ENCODE measurements at regions of chr7 and their contacts with region 1.

Region 1: DNA sequence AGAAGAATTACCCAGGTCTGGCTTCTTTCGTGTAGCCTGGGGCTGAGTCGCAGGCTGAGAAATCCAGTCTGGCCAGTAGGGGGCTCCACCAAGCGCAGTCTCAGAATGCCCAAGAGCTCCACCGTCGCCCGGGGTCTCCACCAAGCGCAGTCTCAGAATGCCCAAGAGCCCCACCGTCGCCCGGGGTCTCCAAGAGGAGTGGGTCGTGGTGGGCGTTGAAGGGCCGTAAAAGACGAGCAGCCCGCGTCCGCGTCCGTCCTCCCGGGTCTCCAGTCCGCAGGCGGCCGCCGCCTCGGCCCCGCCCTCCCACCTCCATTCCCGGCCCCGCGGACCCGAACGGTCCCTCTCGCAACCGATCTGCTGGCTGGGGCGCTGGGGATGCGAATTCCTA is 895 bp upstream of the ZYX start:
- DNase-seq: peak; percentile 83 to 88 (median 84)
- H3K4me3 ChIP-seq: peak overlapping the region; percentile 72 to 97
- H3K4me3 Mint-ChIP-seq: peak overlapping the region; percentile 91 to 95 (median 92)
- H3K27ac ChIP-seq: peak overlapping the region; percentile 91
- H3K27ac Mint-ChIP-seq: peak overlapping the region; percentile 92 to 99 (median 96)
- H3K4me1 ChIP-seq: peaks cover 70% of the 10 kb centered on the region
- H3K4me1 Mint-ChIP-seq: peaks cover 38 to 48% (median 44%) of the 10 kb centered on the region in 4 donors
- H3K27me3 ChIP-seq: no peaks in the 10 kb centered on the region
- H3K27me3 Mint-ChIP-seq: no peaks in the 10 kb centered on the region

Region 2: DNA sequence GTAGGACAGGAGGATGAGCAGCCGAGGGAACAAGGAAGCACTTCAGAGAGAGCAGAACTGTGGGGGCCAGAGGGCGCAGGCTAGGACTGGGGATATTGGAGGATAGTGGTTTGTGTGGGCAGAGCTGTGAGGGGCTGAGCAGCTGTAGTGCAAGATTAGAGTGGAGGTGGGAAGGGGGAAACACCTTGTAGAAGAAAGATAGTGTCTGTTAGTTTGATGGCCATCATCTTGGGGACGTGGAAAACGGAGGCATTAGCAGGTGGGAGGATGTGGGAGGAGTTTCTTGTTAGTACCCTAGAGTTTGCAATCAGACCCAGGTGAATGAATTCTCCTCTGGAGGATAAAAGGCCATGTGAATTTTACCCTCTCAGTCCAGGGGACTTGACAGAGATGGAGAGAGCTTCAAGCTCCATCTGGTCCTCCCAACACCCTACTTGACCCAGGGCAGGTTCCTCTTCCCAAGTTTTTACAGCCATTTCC is 575.5 kb before region 1 on chr7:
- CTCF ChIA-PET with region 1: no interaction called
- POLR2A ChIA-PET with region 1: interaction called, 15 read pairs
- intact Hi-C with region 1: loop called (anchors 5 kb)
- DNase-seq: peak in 3 of 5 donors; percentile 38 to 68 (median 44)
- H3K4me3 ChIP-seq: peak overlapping the region in 1 of 2 donors; percentile 23
- H3K4me3 Mint-ChIP-seq: peak overlapping the region; percentile 16 to 100 (median 77)
- H3K27ac ChIP-seq: peak overlapping the region; percentile 99
- H3K27ac Mint-ChIP-seq: peak overlapping the region; percentile 99 to 100 (median 100)
- H3K4me1 ChIP-seq: peaks cover 97% of the 10 kb centered on the region
- H3K4me1 Mint-ChIP-seq: peaks cover 77 to 100% (median 92%) of the 10 kb centered on the region in 4 donors
- H3K27me3 ChIP-seq: no peaks in the 10 kb centered on the region
- H3K27me3 Mint-ChIP-seq: no peaks in the 10 kb centered on the region

Region 3: DNA sequence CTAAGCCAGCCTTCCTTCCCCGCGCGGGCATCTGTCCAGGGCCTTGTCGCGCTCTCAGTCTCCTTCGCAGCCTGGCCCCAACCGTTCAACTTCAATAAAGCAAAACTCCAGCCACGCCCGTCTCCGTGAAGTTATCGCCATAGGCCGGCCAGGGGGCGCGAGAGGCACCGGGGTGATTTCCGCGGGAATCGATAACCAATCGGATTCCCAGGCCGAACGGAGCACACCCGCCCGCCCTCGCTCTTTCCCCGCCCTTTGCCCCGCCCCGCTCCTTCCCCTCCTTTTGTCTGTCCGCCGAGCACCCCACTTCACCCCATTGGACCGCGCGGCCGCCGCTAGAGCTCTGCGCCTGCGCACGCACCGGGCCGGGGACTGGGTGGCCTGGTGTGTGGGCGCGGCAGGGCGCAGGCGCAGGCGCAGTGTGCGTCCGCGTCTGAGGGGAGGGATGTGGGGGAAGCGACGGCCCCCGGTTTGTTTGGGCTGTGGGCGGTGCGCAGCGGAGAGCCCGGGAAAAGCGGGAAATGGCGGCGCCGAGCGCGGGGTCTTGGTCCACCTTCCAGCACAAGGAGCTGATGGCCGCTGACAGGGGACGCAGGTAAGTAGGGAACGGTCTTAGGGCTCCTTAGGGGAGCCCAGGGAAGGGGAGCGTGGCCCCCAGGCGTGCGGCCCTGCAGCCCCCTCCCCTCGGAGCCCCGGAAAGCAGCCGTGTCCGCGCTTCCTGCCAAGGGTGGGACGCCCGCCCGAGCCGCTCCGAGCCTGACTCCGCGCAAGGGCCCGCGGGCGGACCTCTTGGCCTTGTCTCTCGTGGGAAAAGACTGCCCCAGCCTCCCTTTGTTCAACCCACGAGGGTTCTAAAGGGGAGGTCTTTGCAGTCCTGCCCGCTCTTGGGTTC is 92.1 kb before region 1 on chr7 and contains the start of gene CASP2:
- CTCF ChIA-PET with region 1: interaction called, 3 read pairs
- POLR2A ChIA-PET with region 1: interaction called, 13 read pairs
- intact Hi-C with region 1: loop called (anchors 2 kb)
- DNase-seq: peak; percentile 99 to 100 (median 99)
- H3K4me3 ChIP-seq: peak within 1 kb of the TSS; percentile 82 to 92
- H3K4me3 Mint-ChIP-seq: peak within 1 kb of the TSS; percentile 92 to 99 (median 96)
- H3K27ac ChIP-seq: peak within 1 kb of the TSS; percentile 78
- H3K27ac Mint-ChIP-seq: peak within 1 kb of the TSS; percentile 83 to 98 (median 95)
- H3K4me1 ChIP-seq: peaks cover 44% of the 10 kb centered on the region
- H3K4me1 Mint-ChIP-seq: peaks cover 39 to 75% (median 57%) of the 10 kb centered on the region in 4 donors
- H3K27me3 ChIP-seq: no peaks in the 10 kb centered on the region
- H3K27me3 Mint-ChIP-seq: no peaks in the 10 kb centered on the region
- total RNA-seq, gene CASP2: 94.3 to 96.1 TPM

Region 4: GRCh38 chr7:143305423-143306070 is 74.7 kb before region 1 on chr7:
- CTCF ChIA-PET with region 1: interaction called, 14 read pairs
- POLR2A ChIA-PET with region 1: interaction called, 9 read pairs
- intact Hi-C with region 1: no loop called
- DNase-seq: peak; percentile 49 to 65 (median 62)
- H3K4me3 ChIP-seq: no peak overlapping the region
- H3K4me3 Mint-ChIP-seq: no peak overlapping the region
- H3K27ac ChIP-seq: no peak overlapping the region
- H3K27ac Mint-ChIP-seq: peak overlapping the region; percentile 28 to 86 (median 59)
- H3K4me1 ChIP-seq: peaks cover 13% of the 10 kb centered on the region
- H3K4me1 Mint-ChIP-seq: peaks cover 21 to 44% (median 37%) of the 10 kb centered on the region in 4 donors
- H3K27me3 ChIP-seq: no peaks in the 10 kb centered on the region
- H3K27me3 Mint-ChIP-seq: no peaks in the 10 kb centered on the region

Region 5: DNA sequence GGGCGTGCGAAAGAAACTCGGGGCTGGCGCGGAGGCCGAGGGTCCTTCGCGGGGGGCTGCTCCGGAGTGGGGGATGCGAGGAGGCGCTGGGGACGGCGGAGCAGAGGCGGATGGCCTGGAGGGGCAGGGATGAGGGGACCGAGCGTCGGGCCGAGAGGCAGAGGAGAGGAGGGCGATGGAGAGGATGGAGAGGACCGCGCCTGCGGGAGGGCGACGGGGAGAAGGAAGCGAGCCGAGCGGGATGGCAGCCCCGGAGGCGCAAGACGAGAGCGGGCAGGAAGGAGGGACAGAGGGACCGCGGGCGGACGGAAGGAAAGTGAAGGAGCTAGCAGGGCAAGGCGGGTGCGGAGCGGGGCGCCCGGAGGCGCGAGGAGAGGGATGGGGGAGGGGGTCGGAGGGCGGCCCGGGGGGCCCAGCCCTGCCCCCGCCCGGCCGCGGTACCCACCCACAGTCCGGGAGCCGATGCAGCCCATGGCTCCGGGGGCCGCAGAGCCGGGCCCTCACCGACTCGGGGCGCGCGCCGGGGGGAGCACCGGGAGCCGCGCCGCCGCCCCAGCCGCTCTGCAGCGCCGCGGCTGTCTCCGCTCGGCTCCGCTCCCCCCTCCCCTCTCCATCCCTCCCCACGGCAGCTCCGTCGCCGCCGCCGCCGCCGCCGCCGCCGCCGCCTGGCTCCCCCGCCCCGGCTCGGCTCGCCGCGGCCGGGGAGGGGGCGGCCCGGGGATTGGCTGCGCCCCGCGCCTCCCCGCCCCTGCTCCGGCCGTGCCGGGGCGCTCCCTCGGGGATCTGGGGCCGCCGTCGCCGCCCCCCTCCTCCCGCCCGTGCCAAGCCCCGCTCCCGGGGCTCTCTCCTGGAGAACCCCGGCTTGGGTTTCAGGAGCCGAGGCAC is 17.9 kb before region 1 on chr7 and contains the start of gene FAM131B:
- CTCF ChIA-PET with region 1: interaction called, 7 read pairs
- POLR2A ChIA-PET with region 1: interaction called, 16 read pairs
- intact Hi-C with region 1: loop called (anchors 1 kb)
- DNase-seq: peak in 4 of 5 donors; percentile 34 to 60 (median 40)
- H3K4me3 ChIP-seq: peak within 1 kb of the TSS in 1 of 2 donors; percentile 55
- H3K4me3 Mint-ChIP-seq: peak within 1 kb of the TSS; percentile 84 to 90 (median 86)
- H3K27ac ChIP-seq: no peak within 1 kb of the TSS
- H3K27ac Mint-ChIP-seq: peak within 1 kb of the TSS in 5 of 7 donors; percentile 1 to 78 (median 57)
- H3K4me1 ChIP-seq: peaks cover 8% of the 10 kb centered on the region
- H3K4me1 Mint-ChIP-seq: peaks cover 9 to 16% (median 12%) of the 10 kb centered on the region in 4 donors
- H3K27me3 ChIP-seq: peaks cover 27% of the 10 kb centered on the region
- H3K27me3 Mint-ChIP-seq: peaks cover 17 to 20% of the 10 kb centered on the region in 2 donors
- total RNA-seq, gene FAM131B: 0.61 to 0.97 TPM

Region 6: GRCh38 chr7:143408686-143409561 is 28.7 kb after region 1 on chr7 and contains the start of gene EPHA1:
- CTCF ChIA-PET with region 1: interaction called, 129 read pairs
- POLR2A ChIA-PET with region 1: interaction called, 215 read pairs
- intact Hi-C with region 1: loop called (anchors 1 kb)
- DNase-seq: peak; percentile 52 to 62 (median 57)
- H3K4me3 ChIP-seq: peak within 1 kb of the TSS; percentile 58 to 66
- H3K4me3 Mint-ChIP-seq: peak within 1 kb of the TSS; percentile 89 to 97 (median 92)
- H3K27ac ChIP-seq: peak within 1 kb of the TSS; percentile 15
- H3K27ac Mint-ChIP-seq: peak within 1 kb of the TSS; percentile 76 to 96 (median 96)
- H3K4me1 ChIP-seq: peaks cover 48% of the 10 kb centered on the region
- H3K4me1 Mint-ChIP-seq: peaks cover 47 to 73% (median 55%) of the 10 kb centered on the region in 4 donors
- H3K27me3 ChIP-seq: no peaks in the 10 kb centered on the region
- H3K27me3 Mint-ChIP-seq: no peaks in the 10 kb centered on the region
- total RNA-seq, gene EPHA1: 30.7 to 34.4 TPM

Measured in CD4-positive, alpha-beta memory T cell (primary cell).